ENCODE measurements at regions of chr3 and their contacts with region 1.

Region 1: DNA sequence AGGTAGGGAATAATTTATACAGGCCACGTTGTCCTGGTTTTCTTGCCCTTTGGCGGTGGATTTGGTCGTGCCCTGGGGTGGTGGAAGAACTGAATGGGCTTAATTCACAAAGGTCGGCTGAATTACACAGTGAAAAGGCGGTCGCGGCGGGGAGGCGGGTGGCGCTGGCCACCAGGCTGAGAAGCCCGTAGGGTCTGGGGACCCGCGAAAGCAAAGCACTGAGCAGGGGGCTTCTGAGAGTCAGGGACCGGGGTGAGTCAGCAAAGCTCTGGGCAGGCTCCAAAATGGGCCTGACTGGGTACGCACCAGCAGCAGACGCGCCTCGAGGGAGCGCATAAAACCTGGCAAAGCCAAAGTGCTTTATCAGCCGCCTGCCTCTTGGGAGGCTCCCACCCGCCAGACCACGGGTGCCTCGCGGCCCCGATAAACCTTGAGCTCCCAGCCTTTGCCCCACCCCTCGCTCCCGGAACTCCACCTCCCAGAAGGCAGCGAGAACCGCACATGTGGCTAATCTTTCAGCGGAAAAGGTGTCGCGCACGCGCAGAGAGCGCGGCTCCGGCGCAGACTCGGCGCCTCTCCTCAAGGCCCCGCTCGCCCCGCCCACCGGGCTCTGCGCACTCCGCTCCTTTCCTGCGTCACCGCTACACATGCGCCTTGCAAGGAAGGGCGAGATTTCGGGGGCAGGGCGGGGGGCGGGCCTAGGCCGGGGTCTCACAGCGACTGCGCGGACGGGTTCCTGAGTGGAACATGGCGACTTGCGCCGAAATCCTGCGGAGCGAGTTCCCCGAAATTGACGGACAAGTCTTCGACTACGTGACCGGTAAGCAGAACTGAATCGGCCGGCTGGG is at the start of gene ABCF3:
- DNase-seq: peak; percentile 96 to 99 (median 96)
- ATAC-seq: peak; percentile 96
- H3K4me3 ChIP-seq: peak within 1 kb of the TSS; percentile 92
- H3K27ac ChIP-seq: peak within 1 kb of the TSS; percentile 93
- H3K4me1 ChIP-seq: peaks cover 17 to 32% of the 10 kb centered on the region in 2 experiments
- H3K27me3 ChIP-seq: no peaks in the 10 kb centered on the region
- CTCF ChIP-seq: 0 out of 6 replicates have a peak, but pooled peaks of 1 of the 3 experiments have one; percentile 0
- EP300 ChIP-seq: peak; percentile 66; the same call in 1 of the 2 replicates
- POLR2A ChIP-seq: peak; percentile 82
- RAD21 ChIP-seq: peak in 1 of 2 experiments; percentile 36; a peak in 1 of 4 replicates
- polyA plus RNA-seq, gene ABCF3: 6.7 to 23.7 TPM

Region 2: DNA sequence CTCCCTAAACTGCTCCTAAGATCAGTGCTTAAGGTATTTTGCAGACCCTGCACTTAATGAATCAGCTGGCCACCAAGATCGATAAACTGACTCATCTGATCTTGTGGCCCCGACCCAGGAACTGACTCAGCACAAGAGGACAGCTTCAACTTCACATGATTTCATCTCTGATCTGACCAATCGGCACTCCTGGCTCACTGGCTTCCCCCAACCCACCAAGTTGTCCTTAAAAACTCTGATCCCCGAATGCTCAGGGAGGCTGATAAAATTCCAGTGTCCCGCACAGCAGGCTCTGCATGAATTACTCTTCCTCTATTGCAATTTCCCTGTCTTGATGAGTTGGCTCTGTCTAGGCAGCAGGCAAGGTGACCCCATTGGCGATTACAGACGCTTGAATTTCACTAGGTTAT is 75.4 kb before region 1 on chr3:
- CTCF ChIA-PET with region 1: no interaction called
- POLR2A ChIA-PET with region 1: no interaction called
- in situ Hi-C with region 1: no loop called
- intact Hi-C with region 1: no loop called
- DNase-seq: peak in 1 of 4 experiments; percentile 68
- ATAC-seq: peak; percentile 78
- H3K4me3 ChIP-seq: no peak overlapping the region
- H3K27ac ChIP-seq: no peak overlapping the region; the same call in 2 of the 3 replicates
- H3K4me1 ChIP-seq: peaks cover 0 to 3% of the 10 kb centered on the region in 2 experiments; a peak in 2 of 5 replicates
- H3K27me3 ChIP-seq: no peaks in the 10 kb centered on the region
- CTCF ChIP-seq: no peak
- EP300 ChIP-seq: peak; percentile 66
- POLR2A ChIP-seq: no peak
- RAD21 ChIP-seq: no peak

Region 3: GRCh38 chr3:184135149-184135910 is 50.4 kb before region 1 on chr3 and contains the start of gene EIF2B5:
- CTCF ChIA-PET with region 1: no interaction called
- POLR2A ChIA-PET with region 1: interaction called, 6 read pairs
- in situ Hi-C with region 1: no loop called
- intact Hi-C with region 1: loop called (anchors 2 kb)
- DNase-seq: peak; percentile 90 to 96 (median 92)
- ATAC-seq: peak; percentile 90
- H3K4me3 ChIP-seq: peak within 1 kb of the TSS; percentile 97
- H3K27ac ChIP-seq: peak within 1 kb of the TSS; percentile 92
- H3K4me1 ChIP-seq: peaks cover 7 to 13% of the 10 kb centered on the region in 2 experiments; a peak in 4 of 5 replicates
- H3K27me3 ChIP-seq: no peaks in the 10 kb centered on the region; a peak in 1 of 5 replicates
- CTCF ChIP-seq: peak; percentile 29 to 49 (median 31); a peak in 5 of 6 replicates
- EP300 ChIP-seq: peak; percentile 51
- POLR2A ChIP-seq: peak; percentile 92
- RAD21 ChIP-seq: peak; percentile 20 to 28; a peak in 3 of 4 replicates
- polyA plus RNA-seq, gene EIF2B5: 19.1 to 31.8 TPM

Region 4: DNA sequence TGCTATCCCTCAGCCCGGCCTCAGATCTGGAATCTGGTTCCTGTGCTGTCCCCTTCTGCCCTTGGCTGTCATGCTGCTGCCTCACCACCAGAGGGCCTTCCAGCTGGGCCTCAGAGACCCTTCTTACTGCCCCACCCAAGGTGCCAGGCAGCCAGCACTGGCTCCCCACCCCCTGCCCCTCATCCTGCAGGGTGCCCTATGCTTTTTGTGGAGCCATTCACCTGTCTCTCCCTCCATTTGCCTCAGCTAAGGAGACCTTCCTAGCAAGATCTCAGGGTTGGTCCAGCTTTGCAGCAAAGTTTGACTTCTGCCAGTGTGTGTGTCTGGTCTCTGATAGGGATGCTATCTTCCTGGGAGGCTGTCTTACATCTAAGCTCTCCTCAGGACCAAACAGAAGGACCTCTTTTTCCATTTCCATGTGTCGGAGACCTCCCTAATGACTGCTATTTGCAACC is 41.8 kb after region 1 on chr3:
- CTCF ChIA-PET with region 1: no interaction called
- POLR2A ChIA-PET with region 1: interaction called, 11 read pairs
- in situ Hi-C with region 1: no loop called
- intact Hi-C with region 1: no loop called
- DNase-seq: peak; percentile 59 to 80 (median 79)
- ATAC-seq: peak; percentile 84
- H3K4me3 ChIP-seq: no peak overlapping the region
- H3K27ac ChIP-seq: no peak overlapping the region
- H3K4me1 ChIP-seq: peaks cover 0 to 26% of the 10 kb centered on the region in 2 experiments; a peak in 3 of 5 replicates
- H3K27me3 ChIP-seq: peaks cover 41 to 67% of the 10 kb centered on the region in 2 experiments
- CTCF ChIP-seq: peak; percentile 74 to 82 (median 79)
- EP300 ChIP-seq: no peak
- POLR2A ChIP-seq: no peak
- RAD21 ChIP-seq: peak; percentile 32 to 56; a peak in 3 of 4 replicates

Region 5: DNA sequence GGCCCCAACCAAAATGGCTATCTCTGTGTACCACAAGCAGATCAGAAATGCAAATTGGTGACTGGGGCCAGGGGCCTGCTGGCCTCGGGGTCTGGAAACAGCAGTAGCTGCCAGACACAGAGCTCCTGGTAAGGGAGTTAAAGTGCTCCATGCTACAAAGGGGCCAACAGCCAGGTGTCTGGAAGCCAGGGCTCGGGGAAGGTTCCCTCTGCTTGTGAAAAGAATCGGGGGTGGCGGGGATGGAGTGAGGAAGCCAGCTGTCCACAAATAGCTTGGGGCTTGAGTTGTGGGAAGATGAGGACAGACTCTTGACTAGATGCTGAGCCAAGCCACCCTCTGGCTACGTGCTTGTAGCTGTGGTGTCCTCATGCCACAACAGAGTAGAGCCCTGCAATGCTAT is 233.5 kb after region 1 on chr3:
- CTCF ChIA-PET with region 1: no interaction called
- POLR2A ChIA-PET with region 1: no interaction called
- in situ Hi-C with region 1: no loop called
- intact Hi-C with region 1: no loop called
- DNase-seq: no peak
- ATAC-seq: no peak
- H3K4me3 ChIP-seq: no peak overlapping the region
- H3K27ac ChIP-seq: no peak overlapping the region
- H3K4me1 ChIP-seq: no peaks in the 10 kb centered on the region
- H3K27me3 ChIP-seq: peaks cover 0 to 30% of the 10 kb centered on the region in 2 experiments; a peak in 3 of 5 replicates
- CTCF ChIP-seq: no peak
- EP300 ChIP-seq: no peak
- POLR2A ChIP-seq: no peak
- RAD21 ChIP-seq: no peak

Region 6: DNA sequence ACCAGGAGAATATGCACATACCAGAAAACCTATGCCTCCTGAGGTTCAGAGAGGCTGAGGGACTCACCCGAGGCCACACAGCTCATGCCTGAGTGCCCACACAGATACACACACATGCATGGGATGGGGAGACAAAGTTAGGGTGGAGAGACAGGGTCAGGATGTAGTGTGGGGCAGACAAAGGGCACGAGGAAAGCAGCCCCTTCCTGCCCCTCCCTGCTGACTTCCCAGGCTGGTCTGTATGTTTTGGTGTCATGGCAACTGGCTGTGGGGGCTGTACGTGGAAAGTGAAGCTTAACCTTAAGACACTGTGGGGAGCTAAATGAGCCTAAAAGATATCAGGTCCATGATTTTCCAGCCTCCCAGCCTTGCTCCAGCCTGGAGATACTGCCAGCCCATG is 433.7 kb after region 1 on chr3:
- CTCF ChIA-PET with region 1: no interaction called
- POLR2A ChIA-PET with region 1: no interaction called
- in situ Hi-C with region 1: no loop called
- intact Hi-C with region 1: no loop called
- DNase-seq: no peak
- ATAC-seq: no peak
- H3K4me3 ChIP-seq: no peak overlapping the region
- H3K27ac ChIP-seq: no peak overlapping the region
- H3K4me1 ChIP-seq: no peaks in the 10 kb centered on the region
- H3K27me3 ChIP-seq: peaks cover 30 to 63% of the 10 kb centered on the region in 2 experiments
- CTCF ChIP-seq: no peak
- EP300 ChIP-seq: no peak
- POLR2A ChIP-seq: no peak
- RAD21 ChIP-seq: no peak